ENCODE measurements at regions of chr6 and their contacts with region 1.

Region 1: GRCh38 chr6:17584241-17584803 is 15.8 kb upstream of the FAM8A1 start:
- DNase-seq: peak; percentile 66
- H3K27ac ChIP-seq: no peak overlapping the region
- CTCF ChIP-seq: peak; percentile 85

Region 2: DNA sequence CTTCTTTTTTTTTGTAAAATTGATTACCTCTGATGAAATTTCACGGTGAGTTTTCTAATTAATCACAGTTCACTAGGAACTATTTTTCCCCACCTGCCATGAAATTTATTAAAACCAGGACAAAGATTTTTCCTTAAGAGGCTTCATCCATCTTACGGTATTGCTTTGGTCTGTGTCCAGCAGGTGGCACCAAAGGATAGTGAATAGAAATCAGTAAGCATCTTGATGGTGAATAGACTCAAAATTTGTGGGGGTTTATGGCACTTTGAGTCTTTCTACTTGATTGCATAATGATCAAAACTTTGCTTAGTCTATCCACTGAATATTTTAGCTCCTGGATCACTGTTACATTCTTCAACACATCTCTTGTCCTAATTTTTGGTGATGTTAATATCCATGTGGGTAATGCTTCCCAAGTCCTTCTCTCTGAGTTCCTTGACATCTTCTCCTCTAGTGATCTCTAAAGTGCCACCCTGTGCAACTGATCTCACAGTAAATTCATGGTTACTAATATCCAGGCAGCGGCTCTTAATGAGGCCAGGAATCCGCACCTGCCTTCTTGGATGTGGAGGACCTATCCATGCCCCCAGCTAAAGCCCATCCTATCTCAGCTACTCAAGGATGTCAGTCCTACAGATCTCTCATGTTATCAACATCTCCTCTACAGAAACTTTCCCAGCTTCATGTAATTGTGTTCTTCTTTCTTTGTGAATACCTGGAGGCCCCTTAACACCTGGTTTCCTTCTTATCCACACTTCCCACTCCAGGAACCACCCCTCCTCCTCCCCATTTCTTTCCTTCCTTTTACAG is 428.0 kb before region 1 on chr6:
- CTCF ChIA-PET with region 1: interaction called, 12 read pairs
- POLR2A ChIA-PET with region 1: no interaction called
- DNase-seq: peak; percentile 47
- H3K27ac ChIP-seq: no peak overlapping the region
- CTCF ChIP-seq: peak; percentile 67